PC-9 (cell line): ENCODE measurements at regions of chr6 and their contacts with region 1.

Region 1: DNA sequence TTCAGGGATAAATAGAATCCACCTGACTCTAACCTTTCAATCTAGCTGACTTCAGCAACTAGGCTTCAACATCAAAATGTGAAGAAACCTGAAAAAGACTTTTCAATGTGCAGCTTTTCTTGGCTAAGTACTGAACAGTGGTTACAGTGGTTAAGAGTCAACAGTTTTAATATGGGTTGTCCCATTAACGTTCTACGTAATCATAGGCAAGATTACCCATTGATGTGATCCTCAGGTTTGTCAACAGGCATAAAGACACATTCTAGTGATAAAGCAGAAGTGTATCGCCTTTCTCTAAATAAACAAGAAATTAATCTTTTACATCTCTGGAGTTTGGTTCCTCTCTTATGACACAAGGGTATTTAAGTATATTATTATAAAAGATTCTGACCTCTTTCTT is 154.1 kb upstream of the RUNX2 start:
- DNase-seq: no peak
- H3K4me3 ChIP-seq: no peak overlapping the region
- H3K27ac ChIP-seq: no peak overlapping the region
- H3K4me1 ChIP-seq: no peaks in the 10 kb centered on the region
- H3K27me3 ChIP-seq: no peaks in the 10 kb centered on the region
- CTCF ChIP-seq: no peak

Region 2: DNA sequence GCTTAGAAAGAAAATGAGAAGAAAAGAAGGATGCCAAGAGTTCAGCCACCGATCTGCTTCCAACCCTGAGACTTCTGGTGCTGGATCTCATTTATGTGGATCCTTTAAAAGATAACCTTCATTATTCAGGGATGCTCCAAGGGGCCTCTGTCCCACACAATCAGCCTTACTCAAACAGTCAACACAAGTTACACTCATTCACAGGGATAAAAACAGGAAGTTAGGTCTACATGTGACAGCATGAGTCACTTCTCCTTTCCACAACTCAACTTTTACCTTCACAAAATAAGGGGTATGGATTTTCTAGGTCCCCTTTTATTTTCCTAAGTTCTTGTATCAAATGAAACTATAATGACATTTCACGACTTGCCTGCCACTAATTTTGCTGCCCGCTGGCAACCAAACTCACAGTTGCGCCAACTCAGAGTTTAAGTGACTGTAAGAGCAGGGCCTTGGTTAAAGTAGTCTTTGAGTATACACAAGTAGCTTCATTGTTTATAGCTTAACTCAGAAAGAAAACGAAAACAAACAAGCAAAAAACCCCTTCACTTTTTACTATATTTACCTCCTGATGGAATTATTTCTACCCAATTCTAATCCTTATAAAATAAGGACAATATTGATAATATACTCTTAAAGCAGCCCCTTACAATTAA is 124.7 kb before region 1 on chr6:
- CTCF ChIA-PET with region 1: no interaction called
- POLR2A ChIA-PET with region 1: no interaction called
- intact Hi-C with region 1: no loop called
- DNase-seq: no peak
- H3K4me3 ChIP-seq: no peak overlapping the region
- H3K27ac ChIP-seq: no peak overlapping the region
- H3K4me1 ChIP-seq: no peaks in the 10 kb centered on the region
- H3K27me3 ChIP-seq: no peaks in the 10 kb centered on the region
- CTCF ChIP-seq: no peak

Region 3: DNA sequence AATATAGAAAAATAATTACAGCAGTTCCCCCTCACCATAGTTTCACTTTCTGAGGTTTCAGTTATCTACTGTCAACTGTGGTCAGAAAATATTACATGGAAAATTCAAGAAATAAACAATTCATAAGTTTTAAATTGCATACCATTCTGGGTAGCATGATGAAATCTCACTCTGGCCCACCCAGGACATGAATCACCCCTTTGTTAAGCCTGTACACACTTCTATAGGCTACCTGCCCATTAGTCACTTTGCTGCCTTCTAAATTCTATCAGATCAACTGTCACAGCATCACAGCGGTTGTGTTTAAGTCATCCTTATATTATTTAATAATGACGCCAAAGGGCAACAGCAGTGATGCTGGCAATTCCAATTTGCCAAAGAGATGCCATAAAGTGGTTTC is 13.8 kb after region 1 on chr6:
- CTCF ChIA-PET with region 1: interaction called, 10 read pairs
- POLR2A ChIA-PET with region 1: no interaction called
- intact Hi-C with region 1: no loop called
- DNase-seq: peak in 1 of 2 experiments; percentile 36
- H3K4me3 ChIP-seq: no peak overlapping the region
- H3K27ac ChIP-seq: peak overlapping the region; percentile 52
- H3K4me1 ChIP-seq: peaks cover 9% of the 10 kb centered on the region; the same call in 1 of the 2 replicates
- H3K27me3 ChIP-seq: no peaks in the 10 kb centered on the region
- CTCF ChIP-seq: no peak

Region 4: DNA sequence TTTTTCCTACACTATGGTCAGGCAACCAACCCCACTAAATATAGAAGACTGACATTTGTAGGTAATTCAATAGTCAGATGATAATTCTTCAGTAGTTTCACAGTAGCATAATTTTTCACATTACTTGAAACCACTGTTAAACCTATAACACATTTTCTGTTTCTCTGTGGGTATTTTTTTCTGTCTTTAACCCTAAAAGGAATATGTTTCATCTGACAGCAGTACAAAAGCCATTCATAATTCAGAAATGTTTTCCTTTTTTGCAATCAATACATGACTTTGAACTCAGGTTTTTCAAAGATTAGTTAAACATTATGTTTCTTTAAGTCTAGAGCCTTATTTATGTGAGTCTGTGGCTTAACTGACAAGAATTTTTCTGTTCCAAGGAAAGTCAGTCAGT is 25.5 kb after region 1 on chr6:
- CTCF ChIA-PET with region 1: no interaction called
- POLR2A ChIA-PET with region 1: no interaction called
- intact Hi-C with region 1: no loop called
- DNase-seq: no peak
- H3K4me3 ChIP-seq: no peak overlapping the region
- H3K27ac ChIP-seq: no peak overlapping the region
- H3K4me1 ChIP-seq: no peaks in the 10 kb centered on the region
- H3K27me3 ChIP-seq: no peaks in the 10 kb centered on the region
- CTCF ChIP-seq: no peak